ENCODE measurements at regions of chr22 and their contacts with region 1.

Region 1: GRCh38 chr22:46367707-46368191 is 32.2 kb downstream of the TRMU start:
- DNase-seq: peak; percentile 53
- H3K4me3 Mint-ChIP-seq: no peak overlapping the region
- H3K27ac Mint-ChIP-seq: no peak overlapping the region
- H3K4me1 Mint-ChIP-seq: no peaks in the 10 kb centered on the region
- H3K27me3 Mint-ChIP-seq: peaks cover 6% of the 10 kb centered on the region

Region 2: GRCh38 chr22:45775569-45776312 is 592.0 kb before region 1 on chr22:
- intact Hi-C with region 1: no loop called
- DNase-seq: no peak
- H3K4me3 Mint-ChIP-seq: no peak overlapping the region
- H3K27ac Mint-ChIP-seq: no peak overlapping the region
- H3K4me1 Mint-ChIP-seq: no peaks in the 10 kb centered on the region
- H3K27me3 Mint-ChIP-seq: no peaks in the 10 kb centered on the region

Region 3: GRCh38 chr22:46013460-46014416 is 354.0 kb before region 1 on chr22:
- intact Hi-C with region 1: no loop called
- DNase-seq: peak; percentile 66
- H3K4me3 Mint-ChIP-seq: peak overlapping the region; percentile 87
- H3K27ac Mint-ChIP-seq: peak overlapping the region; percentile 82
- H3K4me1 Mint-ChIP-seq: peaks cover 6% of the 10 kb centered on the region
- H3K27me3 Mint-ChIP-seq: peaks cover 12% of the 10 kb centered on the region

Region 4: GRCh38 chr22:46542011-46542985 is 174.5 kb after region 1 on chr22:
- intact Hi-C with region 1: loop called (anchors 1 kb)
- DNase-seq: peak; percentile 54
- H3K4me3 Mint-ChIP-seq: no peak overlapping the region
- H3K27ac Mint-ChIP-seq: no peak overlapping the region
- H3K4me1 Mint-ChIP-seq: peaks cover 18% of the 10 kb centered on the region
- H3K27me3 Mint-ChIP-seq: peaks cover 42% of the 10 kb centered on the region